ENCODE measurements at regions of chr7 and their contacts with region 1.

Region 1: GRCh38 chr7:50653126-50653864 is 88.1 kb upstream of the DDC start:
- DNase-seq: peak; percentile 85 to 91
- ATAC-seq: peak; percentile 35 to 48
- H3K4me3 ChIP-seq: peak overlapping the region; percentile 7 to 38 (median 26)
- H3K27ac ChIP-seq: peak overlapping the region; percentile 93 to 97 (median 94)
- H3K4me1 ChIP-seq: peaks cover 62 to 66% of the 10 kb centered on the region in 2 donors
- H3K27me3 ChIP-seq: no peaks in the 10 kb centered on the region
- CTCF ChIP-seq: peak in 1 of 5 experiments; percentile 21
- POLR2A ChIP-seq: peak; percentile 63 to 74

Region 2: GRCh38 chr7:50641442-50642405 is 11.6 kb before region 1 on chr7:
- in situ Hi-C with region 1: no loop called
- intact Hi-C with region 1: loop called (anchors 1 kb)
- DNase-seq: peak; percentile 63 to 83
- ATAC-seq: peak; percentile 83 to 90
- H3K4me3 ChIP-seq: peak overlapping the region in 2 of 4 donors; percentile 57 to 63
- H3K27ac ChIP-seq: peak overlapping the region; percentile 43 to 95 (median 88)
- H3K4me1 ChIP-seq: peaks cover 15 to 29% of the 10 kb centered on the region in 2 donors
- H3K27me3 ChIP-seq: no peaks in the 10 kb centered on the region
- CTCF ChIP-seq: peak in 2 of 5 experiments; percentile 35 to 45
- POLR2A ChIP-seq: peak; percentile 88

Region 3: DNA sequence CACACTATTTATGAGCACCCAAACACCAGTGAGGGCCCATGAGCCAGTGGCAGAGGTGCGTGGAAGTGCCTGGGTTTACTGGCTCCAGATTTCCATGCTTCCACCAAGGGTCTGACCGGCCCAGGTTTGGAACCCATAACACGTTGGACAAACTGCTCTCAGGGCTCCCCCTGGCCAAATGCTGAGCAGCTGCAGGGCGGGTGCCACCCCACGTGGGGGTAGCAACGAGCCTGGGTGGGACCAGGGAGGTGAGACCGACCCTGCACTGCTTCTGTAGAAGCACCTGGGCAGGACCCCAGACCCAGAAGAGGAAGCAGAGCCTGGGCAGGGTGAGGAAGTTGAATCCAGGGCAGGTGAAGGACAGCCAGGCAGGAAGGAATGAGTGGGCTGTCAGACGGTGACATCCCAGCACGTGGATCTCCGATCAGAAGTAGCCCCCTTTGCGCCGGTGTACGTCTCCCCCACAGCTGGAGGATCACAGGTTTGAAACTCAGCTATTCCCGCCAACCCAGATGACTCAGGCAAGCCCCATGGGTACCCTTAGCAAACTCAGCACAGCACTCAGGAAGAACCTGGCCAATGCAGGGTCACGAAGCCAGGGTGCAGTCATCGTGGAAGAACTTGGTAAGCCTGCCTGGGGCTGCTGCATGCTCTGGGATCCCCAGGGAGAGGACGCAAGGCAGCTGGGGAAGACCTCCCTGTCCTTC is 12.3 kb after region 1 on chr7:
- in situ Hi-C with region 1: no loop called
- intact Hi-C with region 1: loop called (anchors 1 kb)
- DNase-seq: peak in 1 of 2 donors; percentile 62
- ATAC-seq: no peak
- H3K4me3 ChIP-seq: no peak overlapping the region
- H3K27ac ChIP-seq: peak overlapping the region; percentile 85 to 97 (median 92)
- H3K4me1 ChIP-seq: peaks cover 80 to 89% of the 10 kb centered on the region in 2 donors
- H3K27me3 ChIP-seq: no peaks in the 10 kb centered on the region
- CTCF ChIP-seq: no peak
- POLR2A ChIP-seq: no peak

Region 4: DNA sequence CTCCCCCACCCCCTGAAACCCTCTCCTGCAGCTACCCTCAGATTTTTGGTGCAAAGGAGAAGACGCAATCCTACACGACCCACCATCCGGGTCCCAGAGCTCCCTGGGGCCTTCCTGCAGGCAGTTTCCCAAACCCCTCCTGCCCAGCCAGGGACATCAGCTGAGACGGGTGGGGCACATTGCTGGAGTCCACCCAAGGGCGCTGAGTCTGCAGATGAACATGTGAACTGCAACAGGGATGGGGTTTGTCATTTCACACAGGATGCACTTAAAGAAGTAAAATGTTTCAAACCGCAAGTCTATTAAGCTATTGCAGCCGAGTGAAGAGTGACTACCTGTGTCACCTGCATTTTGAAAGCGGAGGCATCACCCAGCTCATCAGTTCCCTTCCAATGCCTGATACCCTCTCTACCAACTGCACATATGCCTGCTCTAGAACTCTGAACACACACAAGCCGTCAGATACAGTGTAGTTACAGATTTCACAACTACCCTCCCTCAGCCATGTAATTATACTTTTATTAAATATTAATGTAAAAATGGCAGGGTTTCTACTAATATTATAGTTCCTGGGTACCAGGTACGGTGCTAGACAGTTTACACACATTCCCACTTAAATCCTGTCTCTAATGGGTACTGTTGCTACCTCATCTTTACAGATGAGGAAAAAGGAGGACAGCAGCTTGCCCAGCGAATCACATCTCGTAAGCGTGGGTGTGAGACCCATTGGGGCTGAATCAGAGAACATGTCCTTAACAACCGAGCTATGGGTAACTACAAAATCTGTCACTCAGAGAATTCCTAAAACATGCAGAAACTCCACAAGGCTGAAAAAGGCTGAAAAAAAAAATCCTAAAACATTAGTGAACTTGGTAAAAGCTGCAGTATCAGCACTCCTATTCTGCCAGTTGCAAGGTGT is 58.2 kb after region 1 on chr7:
- in situ Hi-C with region 1: no loop called
- intact Hi-C with region 1: loop called (anchors 2 kb)
- DNase-seq: peak; percentile 70 to 84
- ATAC-seq: peak; percentile 81 to 85
- H3K4me3 ChIP-seq: no peak overlapping the region
- H3K27ac ChIP-seq: peak overlapping the region; percentile 33 to 73 (median 59)
- H3K4me1 ChIP-seq: peaks cover 44 to 64% of the 10 kb centered on the region in 2 donors
- H3K27me3 ChIP-seq: no peaks in the 10 kb centered on the region
- CTCF ChIP-seq: no peak
- POLR2A ChIP-seq: no peak